HepG2 (cell line): ENCODE measurements at regions of chr17 and their contacts with region 1.

Region 1: GRCh38 chr17:49031965-49032928 is 35.1 kb downstream of the IGF2BP1 start:
- DNase-seq: peak; percentile 86
- ATAC-seq: peak; percentile 80
- H3K4me3 ChIP-seq: no peak overlapping the region
- H3K27ac ChIP-seq: no peak overlapping the region
- H3K4me1 ChIP-seq: no peaks in the 10 kb centered on the region
- H3K27me3 ChIP-seq: no peaks in the 10 kb centered on the region
- CTCF ChIP-seq: peak; percentile 92
- EP300 ChIP-seq: no peak
- POLR2A ChIP-seq: no peak
- RAD21 ChIP-seq: peak; percentile 98

Region 2: DNA sequence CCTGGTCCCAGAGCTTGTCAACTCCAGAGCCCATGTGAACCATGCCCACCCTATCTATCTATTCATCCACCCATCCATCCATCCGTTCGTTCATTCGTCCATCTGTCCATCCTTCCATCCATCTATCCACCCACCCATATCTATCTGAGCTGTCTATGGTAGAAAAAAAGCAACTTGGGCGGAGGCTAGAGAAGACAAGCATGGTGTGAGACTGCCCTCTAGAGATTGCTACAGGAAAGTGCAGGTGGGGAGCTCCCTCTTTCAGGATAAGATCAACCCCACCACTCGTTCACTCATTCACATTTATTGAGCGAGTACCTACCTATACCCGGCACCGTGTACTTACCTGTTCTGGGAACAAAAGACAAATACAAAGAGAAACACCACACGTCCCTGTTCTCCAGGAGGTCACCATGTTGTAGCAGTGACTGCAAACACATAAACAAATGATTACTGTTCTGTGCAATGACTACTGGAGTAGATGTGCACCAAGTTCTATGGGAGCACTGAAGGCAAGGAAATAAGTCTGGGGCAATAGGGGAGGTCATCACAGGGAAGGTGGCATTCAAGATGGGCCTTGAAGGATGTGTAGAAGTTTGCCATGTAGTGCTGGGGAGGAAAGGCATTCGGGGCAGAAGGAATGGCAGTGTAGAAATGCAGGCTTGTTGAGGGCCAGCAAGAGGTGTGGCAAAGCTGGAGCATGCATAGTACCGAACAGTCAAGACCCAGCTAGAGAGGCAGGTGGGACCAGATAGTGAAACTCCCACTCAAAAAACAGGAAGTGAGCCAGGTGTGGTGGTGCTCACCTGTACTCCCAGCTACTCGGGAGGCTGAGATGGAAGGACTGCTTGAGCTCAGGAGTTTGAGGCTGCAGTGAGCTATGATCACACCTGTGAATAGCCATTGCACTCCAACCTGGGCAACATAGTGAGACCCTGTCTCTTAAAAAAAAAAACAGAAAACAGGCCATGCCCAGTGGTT is 153.0 kb before region 1 on chr17:
- CTCF ChIA-PET with region 1: interaction called, 14 read pairs
- POLR2A ChIA-PET with region 1: no interaction called
- in situ Hi-C with region 1: no loop called
- intact Hi-C with region 1: no loop called
- DNase-seq: peak; percentile 80
- ATAC-seq: peak; percentile 83
- H3K4me3 ChIP-seq: no peak overlapping the region
- H3K27ac ChIP-seq: no peak overlapping the region
- H3K4me1 ChIP-seq: peaks cover 20% of the 10 kb centered on the region
- H3K27me3 ChIP-seq: peaks cover 0 to 9% of the 10 kb centered on the region in 2 experiments; a peak in 3 of 5 replicates
- CTCF ChIP-seq: peak; percentile 97
- EP300 ChIP-seq: no peak
- POLR2A ChIP-seq: no peak
- RAD21 ChIP-seq: peak; percentile 98

Region 3: DNA sequence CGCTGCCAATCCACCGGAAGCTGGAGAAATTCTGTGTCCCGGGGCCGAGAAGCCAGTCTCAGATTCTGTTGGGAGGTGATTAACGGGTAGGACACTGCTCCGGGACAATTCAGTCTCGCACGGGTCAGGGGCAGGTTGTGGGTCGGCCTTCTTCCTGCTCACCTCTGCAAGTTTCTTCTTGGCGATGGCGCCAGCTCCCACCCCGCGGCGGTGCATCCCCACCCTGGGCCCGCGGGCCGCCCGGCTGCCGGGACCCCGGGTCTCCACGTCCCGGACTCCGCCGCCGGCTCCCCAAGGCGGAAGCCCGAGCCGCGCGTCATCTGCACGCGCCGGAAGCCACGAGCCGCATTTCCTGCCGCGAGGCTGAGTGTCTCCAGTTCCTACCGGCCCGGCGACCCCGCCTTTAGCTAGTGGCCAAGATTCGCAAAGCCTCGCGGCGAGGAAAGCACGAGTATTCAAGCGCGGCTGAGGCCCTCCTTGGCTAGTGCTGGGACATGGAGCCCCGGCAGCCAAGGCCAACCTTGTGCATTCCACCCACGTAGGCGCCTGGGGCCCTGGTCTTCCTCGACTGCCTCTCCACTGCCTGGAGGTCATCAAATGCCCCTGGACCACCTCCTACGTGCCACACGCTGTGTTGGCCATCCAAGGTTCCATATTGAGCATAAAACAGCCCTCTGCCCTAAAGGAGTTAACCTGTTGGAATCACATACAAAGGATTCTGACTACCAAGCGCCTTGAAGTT is 87.6 kb before region 1 on chr17 and contains the start of gene SNF8:
- CTCF ChIA-PET with region 1: interaction called, 10 read pairs
- POLR2A ChIA-PET with region 1: interaction called, 18 read pairs
- in situ Hi-C with region 1: no loop called
- intact Hi-C with region 1: loop called (anchors 1 kb)
- DNase-seq: peak; percentile 90
- ATAC-seq: peak; percentile 97
- H3K4me3 ChIP-seq: peak within 1 kb of the TSS; percentile 75 to 91 (median 90)
- H3K27ac ChIP-seq: peak within 1 kb of the TSS; percentile 86
- H3K4me1 ChIP-seq: peaks cover 27% of the 10 kb centered on the region
- H3K27me3 ChIP-seq: no peaks in the 10 kb centered on the region; a peak in 1 of 5 replicates
- CTCF ChIP-seq: peak; percentile 35; the same call in 1 of the 2 replicates
- EP300 ChIP-seq: no peak; a peak in 1 of 4 replicates
- POLR2A ChIP-seq: peak; percentile 91 to 92
- RAD21 ChIP-seq: peak; percentile 71; the same call in 1 of the 2 replicates
- total RNA-seq, gene SNF8: 152 and 153 TPM in 2 replicates

Region 4: DNA sequence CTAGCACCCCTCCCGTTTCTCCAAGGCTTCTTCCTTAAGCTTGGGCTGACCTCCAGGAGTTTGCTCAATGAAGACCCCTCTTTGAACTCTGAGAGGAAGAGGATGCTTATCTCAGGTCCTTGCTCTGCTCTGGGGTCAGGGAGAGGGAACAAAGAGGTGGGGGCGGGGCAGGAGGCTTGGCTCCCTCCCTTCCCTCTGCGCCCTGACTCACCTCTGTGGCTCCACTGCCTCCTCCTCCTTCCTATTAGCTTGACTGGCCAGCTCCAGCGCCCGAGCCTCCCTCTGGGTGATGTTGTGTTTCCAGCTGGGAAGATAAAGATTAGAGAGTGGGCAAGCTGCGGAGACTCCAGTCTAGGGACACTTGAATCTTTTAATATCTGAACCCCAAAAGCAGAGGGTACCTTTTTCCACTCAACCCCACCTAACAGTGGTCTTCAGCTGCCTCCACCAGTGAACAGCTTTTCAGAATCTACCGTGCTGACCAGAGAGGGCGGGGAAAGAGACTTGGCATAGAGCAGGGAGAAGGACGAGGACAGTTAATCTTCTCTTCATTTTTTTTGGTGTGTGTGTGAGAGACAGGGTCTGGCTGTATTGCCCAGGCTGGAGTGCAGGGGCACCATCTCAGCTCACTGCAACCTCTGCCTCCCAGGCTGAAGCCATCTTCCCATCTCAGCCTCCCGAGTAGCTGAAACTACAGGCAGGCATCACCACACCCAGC is 70.6 kb before region 1 on chr17:
- CTCF ChIA-PET with region 1: interaction called, 5 read pairs
- POLR2A ChIA-PET with region 1: interaction called, 17 read pairs
- in situ Hi-C with region 1: no loop called
- intact Hi-C with region 1: no loop called
- DNase-seq: peak; percentile 78
- ATAC-seq: peak; percentile 89
- H3K4me3 ChIP-seq: peak overlapping the region; percentile 55 to 74 (median 58)
- H3K27ac ChIP-seq: peak overlapping the region; percentile 49
- H3K4me1 ChIP-seq: peaks cover 54% of the 10 kb centered on the region
- H3K27me3 ChIP-seq: no peaks in the 10 kb centered on the region
- CTCF ChIP-seq: 0 out of 2 replicates have a peak, but pooled peaks have one; percentile 12
- EP300 ChIP-seq: peak in 1 of 2 experiments; percentile 69; a peak in 1 of 4 replicates
- POLR2A ChIP-seq: no peak; a peak in 1 of 4 replicates
- RAD21 ChIP-seq: no peak

Region 5: GRCh38 chr17:49260011-49260921 is 228.0 kb after region 1 on chr17:
- CTCF ChIA-PET with region 1: no interaction called
- POLR2A ChIA-PET with region 1: no interaction called
- in situ Hi-C with region 1: no loop called
- intact Hi-C with region 1: no loop called
- DNase-seq: peak; percentile 35
- ATAC-seq: peak; percentile 87
- H3K4me3 ChIP-seq: peak overlapping the region; percentile 46 to 76 (median 55)
- H3K27ac ChIP-seq: no peak overlapping the region
- H3K4me1 ChIP-seq: peaks cover 13% of the 10 kb centered on the region
- H3K27me3 ChIP-seq: peaks cover 2 to 25% of the 10 kb centered on the region in 2 experiments; a peak in 4 of 5 replicates
- CTCF ChIP-seq: no peak
- EP300 ChIP-seq: no peak
- POLR2A ChIP-seq: no peak
- RAD21 ChIP-seq: no peak

Region 6: DNA sequence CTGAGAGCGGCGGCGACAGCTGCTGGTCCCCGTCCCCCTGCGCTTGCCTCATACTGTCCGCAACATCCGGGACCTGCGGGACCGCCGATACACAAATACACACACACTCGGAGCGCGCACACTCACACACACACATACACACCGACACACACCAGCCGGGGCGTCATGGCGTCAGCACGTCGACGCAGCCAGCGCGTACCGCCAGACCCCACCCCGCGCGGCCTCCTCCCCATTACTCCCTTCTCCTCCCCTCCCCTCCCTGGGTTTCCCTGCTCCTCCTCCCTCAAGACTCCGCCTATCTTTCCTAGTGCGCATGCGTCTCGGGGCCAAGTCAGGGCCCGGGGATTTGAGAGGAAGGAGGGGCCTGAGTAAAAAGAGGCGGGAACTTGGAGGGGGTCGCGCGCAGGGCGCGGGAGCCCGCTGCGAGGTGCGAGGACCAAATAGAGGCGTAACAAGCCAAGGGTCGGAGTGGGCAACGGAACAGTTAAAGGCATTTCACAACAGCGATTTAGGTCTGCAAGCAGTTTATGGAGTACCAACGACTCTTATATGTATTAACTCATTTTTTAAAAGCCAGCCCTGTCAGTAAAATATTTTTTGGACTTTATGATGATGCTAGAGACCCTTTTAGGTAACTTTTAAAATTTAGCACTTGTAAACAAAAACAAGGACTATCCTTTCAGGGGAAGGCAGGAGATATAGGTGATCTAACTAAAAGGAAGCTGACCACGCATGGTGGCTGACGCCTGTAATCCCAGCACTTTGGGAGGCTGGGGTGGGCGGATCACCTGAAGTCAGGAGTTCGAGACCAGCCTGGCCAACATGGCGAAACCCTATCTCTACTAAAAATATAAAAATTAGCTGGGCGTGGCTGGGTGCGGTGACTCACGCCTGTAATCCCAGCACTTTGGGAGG is 645.9 kb after region 1 on chr17 and contains the start of gene SPOP:
- CTCF ChIA-PET with region 1: no interaction called
- POLR2A ChIA-PET with region 1: no interaction called
- in situ Hi-C with region 1: no loop called
- intact Hi-C with region 1: no loop called
- DNase-seq: peak; percentile 98
- ATAC-seq: peak; percentile 88
- H3K4me3 ChIP-seq: peak within 1 kb of the TSS; percentile 68 to 77 (median 74)
- H3K27ac ChIP-seq: peak within 1 kb of the TSS; percentile 73
- H3K4me1 ChIP-seq: peaks cover 49% of the 10 kb centered on the region
- H3K27me3 ChIP-seq: no peaks in the 10 kb centered on the region; a peak in 1 of 5 replicates
- CTCF ChIP-seq: peak; percentile 19; the same call in 1 of the 2 replicates
- EP300 ChIP-seq: no peak
- POLR2A ChIP-seq: peak; percentile 56 to 81
- RAD21 ChIP-seq: 0 out of 2 replicates have a peak, but pooled peaks have one; percentile 19
- total RNA-seq, gene SPOP: 60.8 and 79.4 TPM in 2 replicates